K562 (cell line): ENCODE measurements at regions of chr1 and their contacts with region 1.

Region 1: GRCh38 chr1:172449585-172450534 is 6.0 kb upstream of the PIGC start:
- DNase-seq: peak; percentile 83 to 89 (median 84)
- ATAC-seq: peak; percentile 96
- H3K4me3 ChIP-seq: no peak overlapping the region
- H3K27ac ChIP-seq: peak overlapping the region; percentile 18; the same call in 1 of the 3 replicates
- H3K4me1 ChIP-seq: peaks cover 26 to 41% of the 10 kb centered on the region in 2 experiments
- H3K27me3 ChIP-seq: no peaks in the 10 kb centered on the region
- CTCF ChIP-seq: peak; percentile 95 to 100 (median 99)
- EP300 ChIP-seq: peak; percentile 23; the same call in 1 of the 2 replicates
- POLR2A ChIP-seq: no peak
- RAD21 ChIP-seq: peak; percentile 96 to 98

Region 2: GRCh38 chr1:172497230-172497629 is 47.4 kb after region 1 on chr1:
- CTCF ChIA-PET with region 1: no interaction called
- POLR2A ChIA-PET with region 1: interaction called, 3 read pairs
- in situ Hi-C with region 1: no loop called
- intact Hi-C with region 1: loop called (anchors 5 kb)
- DNase-seq: no peak
- ATAC-seq: no peak; the same call in 2 of the 3 replicates
- H3K4me3 ChIP-seq: no peak overlapping the region
- H3K27ac ChIP-seq: no peak overlapping the region
- H3K4me1 ChIP-seq: peaks cover 0 to 13% of the 10 kb centered on the region in 2 experiments; a peak in 3 of 5 replicates
- H3K27me3 ChIP-seq: no peaks in the 10 kb centered on the region
- CTCF ChIP-seq: no peak
- EP300 ChIP-seq: no peak
- POLR2A ChIP-seq: no peak
- RAD21 ChIP-seq: no peak

Region 3: DNA sequence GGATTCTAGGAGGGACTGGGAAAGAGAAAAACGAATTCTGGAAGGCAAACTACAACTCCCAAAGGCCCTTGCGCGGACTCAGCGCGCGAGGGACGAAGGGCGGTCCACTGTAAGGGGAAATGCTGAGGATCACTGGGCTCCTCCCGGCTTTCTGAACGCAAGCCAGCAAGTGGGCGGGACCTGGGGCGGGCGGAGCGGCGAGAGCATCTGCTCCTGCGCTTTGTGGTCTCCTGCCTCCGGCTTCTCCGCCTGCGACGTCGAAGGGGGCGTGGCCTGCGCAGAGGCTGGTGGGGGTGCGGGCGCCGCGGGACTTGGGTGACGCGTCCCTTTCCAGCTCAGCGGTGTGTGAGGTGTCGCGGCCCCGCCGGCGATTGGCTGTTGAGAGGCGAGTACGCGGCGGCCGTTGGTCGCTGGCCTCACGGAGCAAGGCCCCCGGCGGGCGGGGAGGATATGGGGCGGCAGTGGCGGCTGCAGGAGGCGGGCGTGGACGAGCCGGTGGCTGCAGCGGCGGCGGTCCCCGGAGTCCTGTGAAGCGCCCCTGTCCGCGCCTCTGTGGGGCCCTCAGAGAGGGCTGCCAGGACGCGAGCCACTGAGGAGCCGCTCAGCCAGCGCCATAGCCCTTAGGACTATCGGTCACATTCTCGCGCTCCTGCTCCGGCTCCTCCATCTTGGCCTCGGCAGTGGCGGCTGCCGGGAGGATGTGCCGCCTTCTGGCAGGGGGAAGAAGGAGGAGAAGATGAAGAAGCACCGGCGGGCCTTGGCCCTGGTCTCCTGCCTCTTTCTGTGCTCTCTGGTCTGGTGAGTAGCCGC is 83.0 kb after region 1 on chr1 and contains the start of gene SUCO:
- CTCF ChIA-PET with region 1: interaction called, 3 read pairs
- POLR2A ChIA-PET with region 1: interaction called, 6 read pairs
- in situ Hi-C with region 1: no loop called
- intact Hi-C with region 1: loop called (anchors 1 kb)
- DNase-seq: peak; percentile 99 to 100 (median 99)
- ATAC-seq: peak; percentile 92
- H3K4me3 ChIP-seq: peak within 1 kb of the TSS; percentile 59
- H3K27ac ChIP-seq: peak within 1 kb of the TSS; percentile 99
- H3K4me1 ChIP-seq: peaks cover 3 to 42% of the 10 kb centered on the region in 2 experiments; a peak in 3 of 5 replicates
- H3K27me3 ChIP-seq: no peaks in the 10 kb centered on the region
- CTCF ChIP-seq: peak in 1 of 3 experiments; percentile 21; a peak in 2 of 6 replicates
- EP300 ChIP-seq: no peak; the same call in 1 of the 2 replicates
- POLR2A ChIP-seq: peak; percentile 93
- RAD21 ChIP-seq: peak; percentile 24 to 30; a peak in 3 of 4 replicates
- polyA plus RNA-seq, gene SUCO: 2.5 to 3.6 TPM

Region 4: GRCh38 chr1:172609528-172609927 is 159.7 kb after region 1 on chr1:
- CTCF ChIA-PET with region 1: interaction called, 3 read pairs
- POLR2A ChIA-PET with region 1: no interaction called
- in situ Hi-C with region 1: no loop called
- intact Hi-C with region 1: loop called (anchors 1 kb)
- DNase-seq: peak in 2 of 4 experiments; percentile 27 to 31
- ATAC-seq: peak; percentile 76; the same call in 2 of the 3 replicates
- H3K4me3 ChIP-seq: no peak overlapping the region
- H3K27ac ChIP-seq: no peak overlapping the region
- H3K4me1 ChIP-seq: peaks cover 0 to 5% of the 10 kb centered on the region in 2 experiments; a peak in 2 of 5 replicates
- H3K27me3 ChIP-seq: no peaks in the 10 kb centered on the region
- CTCF ChIP-seq: peak in 1 of 3 experiments; percentile 68; a peak in 2 of 6 replicates
- EP300 ChIP-seq: no peak
- POLR2A ChIP-seq: no peak
- RAD21 ChIP-seq: peak; percentile 69 to 93

Region 5: DNA sequence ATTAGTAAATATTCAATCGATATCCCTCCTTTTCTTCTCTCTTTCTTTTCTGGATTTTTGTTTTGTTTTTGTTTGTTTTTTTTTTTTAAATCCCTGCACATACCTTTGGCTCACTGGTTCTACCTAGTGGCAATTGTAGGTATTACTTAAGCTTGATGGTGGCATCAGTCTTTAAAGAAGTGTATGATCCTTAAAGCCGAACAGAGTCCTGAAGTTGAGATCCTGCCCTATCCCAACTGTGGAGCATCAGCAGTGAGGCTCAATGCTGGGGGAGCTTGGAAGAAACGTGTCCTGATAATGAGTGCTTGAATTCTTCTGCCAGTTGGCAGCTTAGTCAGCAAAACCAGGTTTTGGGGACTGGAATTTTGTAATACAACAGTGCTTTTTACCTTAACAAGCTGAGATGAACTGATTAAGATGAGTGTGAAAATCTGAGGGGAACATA is 269.9 kb after region 1 on chr1:
- CTCF ChIA-PET with region 1: interaction called, 6 read pairs
- POLR2A ChIA-PET with region 1: no interaction called
- in situ Hi-C with region 1: no loop called
- intact Hi-C with region 1: loop called (anchors 1 kb)
- DNase-seq: peak; percentile 52 to 61 (median 56)
- ATAC-seq: peak; percentile 85
- H3K4me3 ChIP-seq: no peak overlapping the region
- H3K27ac ChIP-seq: no peak overlapping the region
- H3K4me1 ChIP-seq: peaks cover 3 to 22% of the 10 kb centered on the region in 2 experiments; a peak in 4 of 5 replicates
- H3K27me3 ChIP-seq: no peaks in the 10 kb centered on the region
- CTCF ChIP-seq: peak; percentile 64 to 85 (median 68); a peak in 5 of 6 replicates
- EP300 ChIP-seq: no peak
- POLR2A ChIP-seq: no peak
- RAD21 ChIP-seq: peak; percentile 80 to 88

Region 6: GRCh38 chr1:172727956-172728603 is 278.2 kb after region 1 on chr1:
- CTCF ChIA-PET with region 1: no interaction called
- POLR2A ChIA-PET with region 1: interaction called, 3 read pairs
- in situ Hi-C with region 1: loop called (anchors 5 kb)
- intact Hi-C with region 1: loop called (anchors 1 kb)
- DNase-seq: peak; percentile 57 to 73 (median 67)
- ATAC-seq: peak; percentile 99
- H3K4me3 ChIP-seq: no peak overlapping the region
- H3K27ac ChIP-seq: no peak overlapping the region
- H3K4me1 ChIP-seq: no peaks in the 10 kb centered on the region; a peak in 2 of 5 replicates
- H3K27me3 ChIP-seq: no peaks in the 10 kb centered on the region
- CTCF ChIP-seq: peak; percentile 97 to 99 (median 97)
- EP300 ChIP-seq: no peak
- POLR2A ChIP-seq: no peak
- RAD21 ChIP-seq: peak; percentile 50 to 94